Lower lobe of right lung (tissue), 2 donors: ENCODE measurements at regions of chr6 and their contacts with region 1.

Region 1: DNA sequence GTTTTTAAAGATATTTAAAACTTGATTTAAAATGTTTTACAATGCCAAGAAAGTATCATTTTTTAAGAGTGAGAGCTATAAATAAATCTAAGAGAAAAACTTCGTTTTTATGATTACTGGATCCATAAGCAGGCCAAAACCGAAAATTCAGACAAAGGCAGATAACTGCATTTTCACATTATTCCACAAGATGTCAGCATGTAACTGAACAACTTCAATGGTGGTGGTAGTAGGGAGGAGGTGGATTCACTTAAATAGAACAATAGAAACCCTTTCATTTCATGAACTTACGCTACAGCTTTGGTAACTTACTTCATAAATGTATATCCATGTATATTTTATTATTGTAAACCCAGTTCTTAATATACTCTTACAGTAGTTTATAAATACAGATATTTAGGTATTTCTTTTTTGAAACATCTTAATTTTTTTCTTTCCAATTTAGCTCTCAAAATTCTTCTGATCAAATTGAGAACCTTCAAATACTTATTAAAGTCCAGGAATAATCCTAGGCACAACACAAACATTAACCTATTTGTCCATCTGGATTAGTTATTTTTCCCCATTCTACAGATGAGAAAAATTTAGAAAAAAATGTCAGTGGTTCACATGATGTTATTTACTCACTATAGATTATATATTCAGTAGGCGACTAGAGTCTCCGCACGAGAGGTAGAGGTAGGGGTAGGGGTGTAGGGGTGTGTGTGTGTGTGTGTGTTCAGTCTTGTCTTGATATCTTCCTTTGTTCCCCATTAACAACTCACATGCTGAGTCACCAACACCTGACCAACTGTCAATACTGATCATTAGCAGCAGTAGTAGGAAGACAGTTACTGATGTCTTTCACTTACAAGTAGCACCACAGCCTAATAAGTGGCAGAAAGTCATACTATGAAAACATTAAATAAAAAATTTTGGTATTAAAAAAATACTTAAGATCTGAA is 111.5 kb downstream of the ARHGAP18 start:
- DNase-seq: no peak
- ATAC-seq: peak; percentile 68 to 78
- H3K4me3 ChIP-seq: no peak overlapping the region
- H3K27ac ChIP-seq: no peak overlapping the region
- H3K4me1 ChIP-seq: no peaks in the 10 kb centered on the region
- H3K27me3 ChIP-seq: no peaks in the 10 kb centered on the region
- CTCF ChIP-seq: peak; percentile 83

Region 2: DNA sequence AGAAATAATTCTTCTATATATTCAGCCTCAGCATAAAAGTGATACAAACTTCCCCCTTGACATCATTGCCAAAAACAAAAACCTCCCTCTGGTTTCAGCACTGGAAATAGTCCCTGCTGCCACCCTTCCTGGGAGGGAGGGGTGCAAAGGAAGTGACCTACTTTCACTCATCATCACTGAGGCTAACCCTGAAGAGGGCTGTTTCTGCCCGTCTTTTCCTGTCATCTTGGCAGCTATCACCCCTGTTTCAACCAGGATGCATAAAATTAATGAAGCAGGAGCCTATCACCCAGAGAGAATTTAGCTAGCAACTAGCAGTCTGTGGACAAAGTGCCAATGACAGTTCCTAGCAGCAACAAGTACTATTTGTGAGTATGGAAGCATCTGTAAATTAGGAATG is 317.8 kb before region 1 on chr6:
- intact Hi-C with region 1: no loop called
- DNase-seq: no peak
- ATAC-seq: no peak
- H3K4me3 ChIP-seq: no peak overlapping the region
- H3K27ac ChIP-seq: no peak overlapping the region
- H3K4me1 ChIP-seq: no peaks in the 10 kb centered on the region
- H3K27me3 ChIP-seq: no peaks in the 10 kb centered on the region
- CTCF ChIP-seq: no peak

Region 3: DNA sequence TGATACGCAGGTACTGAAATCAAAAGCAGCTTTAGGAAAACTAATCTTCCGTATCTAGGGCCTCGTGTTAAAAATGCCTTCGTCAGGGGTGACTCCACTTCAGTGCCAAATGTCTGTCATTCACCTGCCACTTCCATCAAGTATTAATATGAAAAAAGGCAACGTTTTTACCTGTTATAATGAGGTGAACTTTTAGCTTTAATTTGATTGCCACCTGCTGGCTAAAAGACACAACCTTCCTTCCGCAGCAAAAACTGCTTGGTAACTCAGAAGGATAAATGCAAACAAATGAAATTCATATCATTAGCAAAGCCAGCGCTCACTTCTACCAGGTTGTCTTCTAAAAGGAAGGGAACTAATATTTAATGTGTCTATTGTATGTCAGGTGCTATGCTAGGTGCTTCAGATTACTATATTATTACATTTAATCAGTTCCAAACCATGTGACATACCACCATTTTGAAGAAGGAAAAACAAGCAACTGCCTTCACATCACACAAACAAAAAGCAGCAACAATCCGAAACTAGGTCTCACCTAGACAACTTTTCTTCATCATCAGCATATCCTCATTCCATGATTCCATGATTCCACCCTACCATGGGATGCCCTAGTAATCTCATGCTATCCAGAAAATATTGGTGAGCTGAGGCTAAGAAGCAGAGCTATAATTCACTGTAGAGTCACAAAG is 132.1 kb after region 1 on chr6:
- intact Hi-C with region 1: loop called (anchors 5 kb)
- DNase-seq: no peak
- ATAC-seq: peak in 1 of 2 donors; percentile 84
- H3K4me3 ChIP-seq: no peak overlapping the region
- H3K27ac ChIP-seq: no peak overlapping the region
- H3K4me1 ChIP-seq: peaks cover 7% of the 10 kb centered on the region
- H3K27me3 ChIP-seq: no peaks in the 10 kb centered on the region
- CTCF ChIP-seq: peak; percentile 67